ENCODE measurements at regions of chr20 and their contacts with region 1.

Region 1: DNA sequence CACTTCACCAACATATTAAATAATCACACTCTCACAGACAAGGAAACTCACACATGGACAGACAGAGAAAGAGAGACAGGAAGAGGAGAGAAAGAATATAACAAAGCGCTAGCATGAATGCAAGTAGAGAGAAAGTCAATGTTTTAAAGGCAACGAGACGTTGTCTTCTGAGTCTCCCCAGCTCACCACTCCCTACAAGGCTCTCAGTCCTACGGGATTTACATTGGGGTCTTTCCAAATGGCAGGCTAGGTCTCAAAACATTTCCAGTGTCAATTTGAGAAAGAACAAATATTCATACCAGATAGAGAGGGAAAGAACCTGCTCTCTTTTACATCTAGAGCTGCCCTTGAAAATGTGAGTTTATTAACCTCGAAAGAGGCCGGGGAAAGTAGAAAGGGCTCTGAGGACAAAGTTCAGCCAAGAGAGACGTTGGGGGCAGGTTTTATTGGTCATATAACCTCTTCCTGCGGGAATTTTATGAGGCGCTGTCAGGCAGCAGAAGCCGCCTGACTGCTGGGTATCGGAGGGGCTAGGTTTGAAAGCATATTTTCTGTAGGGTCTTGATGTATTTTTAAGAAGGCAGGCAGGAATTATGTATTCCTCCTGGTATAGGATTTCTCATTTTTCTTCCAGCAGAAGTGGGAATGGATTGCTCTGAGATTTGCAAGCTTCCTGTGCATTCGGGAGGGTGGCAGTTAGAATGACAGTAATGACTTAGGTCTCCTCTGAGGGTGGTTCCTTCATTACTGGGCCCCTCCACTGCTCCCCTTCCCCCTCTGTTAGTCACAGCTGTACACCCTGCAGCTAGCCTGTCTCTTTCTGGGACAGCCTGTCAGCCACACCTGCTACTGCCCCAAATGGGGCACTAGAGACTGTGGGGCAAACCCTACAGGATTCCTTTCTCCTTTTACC is 34.4 kb upstream of the KIF16B start:
- DNase-seq: no peak
- ATAC-seq: no peak
- H3K4me3 ChIP-seq: no peak overlapping the region
- H3K27ac ChIP-seq: no peak overlapping the region
- H3K4me1 ChIP-seq: no peaks in the 10 kb centered on the region
- H3K27me3 ChIP-seq: no peaks in the 10 kb centered on the region
- CTCF ChIP-seq: no peak

Region 2: GRCh38 chr20:16780345-16780744 is 172.7 kb after region 1 on chr20:
- CTCF ChIA-PET with region 1: no interaction called
- POLR2A ChIA-PET with region 1: interaction called, 13 read pairs
- in situ Hi-C with region 1: no loop called
- intact Hi-C with region 1: no loop called
- DNase-seq: no peak
- ATAC-seq: no peak
- H3K4me3 ChIP-seq: no peak overlapping the region
- H3K27ac ChIP-seq: no peak overlapping the region
- H3K4me1 ChIP-seq: no peaks in the 10 kb centered on the region
- H3K27me3 ChIP-seq: no peaks in the 10 kb centered on the region; the same call in 1 of the 2 replicates
- CTCF ChIP-seq: no peak

Region 3: DNA sequence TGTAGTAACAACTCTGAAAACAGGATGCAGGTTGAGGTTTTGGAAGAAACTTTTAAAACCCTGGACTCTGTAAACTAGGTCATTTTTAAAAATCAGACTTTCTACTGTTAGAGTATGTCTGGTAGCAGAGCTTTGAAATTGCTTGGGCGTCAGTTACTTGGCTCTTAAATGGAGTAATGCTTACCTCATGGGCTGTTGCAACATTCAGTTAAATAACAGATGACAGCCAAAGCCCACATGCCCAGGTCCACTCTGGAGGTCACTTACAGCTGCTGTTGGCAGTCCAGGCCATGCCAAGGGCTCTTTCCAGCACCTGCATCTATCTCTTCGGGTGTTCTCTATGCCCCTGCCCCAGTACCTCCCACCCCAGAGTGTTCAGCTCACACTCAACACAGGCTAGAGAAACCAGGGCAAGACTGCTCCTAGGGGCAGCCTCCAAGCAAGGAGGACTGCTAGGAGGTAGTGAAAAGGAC is 1188.5 kb after region 1 on chr20:
- CTCF ChIA-PET with region 1: no interaction called
- POLR2A ChIA-PET with region 1: interaction called, 11 read pairs
- in situ Hi-C with region 1: no loop called
- intact Hi-C with region 1: no loop called
- DNase-seq: no peak
- ATAC-seq: no peak
- H3K4me3 ChIP-seq: no peak overlapping the region
- H3K27ac ChIP-seq: no peak overlapping the region
- H3K4me1 ChIP-seq: no peaks in the 10 kb centered on the region; the same call in 1 of the 2 replicates
- H3K27me3 ChIP-seq: no peaks in the 10 kb centered on the region
- CTCF ChIP-seq: no peak

Measured in Panc1 (cell line).